Common myeloid progenitor, CD34-positive (primary cell): ENCODE measurements at regions of chr12 and their contacts with region 1.

Region 1: GRCh38 chr12:46382964-46383653 is 10.5 kb upstream of the SLC38A2 start:
- DNase-seq: peak; percentile 96 to 98 (median 98)
- H3K4me3 ChIP-seq: peak overlapping the region; percentile 60 to 93 (median 85)
- H3K27ac ChIP-seq: peak overlapping the region; percentile 84 to 93
- H3K4me1 ChIP-seq: peaks cover 29 to 52% (median 45%) of the 10 kb centered on the region in 4 experiments
- H3K27me3 ChIP-seq: no peaks in the 10 kb centered on the region

Region 2: DNA sequence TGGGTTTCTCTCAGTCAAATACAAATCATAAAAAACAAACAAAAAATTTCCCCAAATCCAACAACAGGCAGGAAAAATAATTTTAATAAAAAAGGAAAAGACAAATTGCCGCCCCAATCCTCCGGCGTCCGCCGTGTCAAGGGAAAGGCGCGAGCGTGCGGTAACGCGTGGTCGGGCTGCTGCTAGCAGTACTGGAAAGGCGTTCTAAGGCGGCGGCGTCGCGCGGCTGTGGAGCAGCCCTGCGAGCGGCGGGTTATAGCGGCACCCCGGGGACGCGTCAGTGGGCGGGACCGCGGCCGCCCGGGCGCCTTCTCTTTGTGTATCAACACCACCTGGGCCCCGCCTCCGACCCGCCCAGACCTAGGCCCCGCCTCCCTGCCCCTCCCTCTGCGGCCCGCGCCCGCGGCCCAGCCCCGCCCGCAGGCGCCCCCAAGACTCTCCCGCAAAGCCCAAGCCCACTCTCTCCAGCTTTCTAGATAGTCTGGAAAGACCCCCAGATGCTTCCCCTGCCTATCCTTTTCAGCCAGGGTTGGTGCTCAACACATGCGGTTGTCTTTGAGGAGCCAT is 10.5 kb before region 1 on chr12 and contains the start of gene SLC38A2:
- CTCF ChIA-PET with region 1: interaction called, 4 read pairs
- POLR2A ChIA-PET with region 1: interaction called, 25 read pairs
- DNase-seq: peak; percentile 92 to 94 (median 92)
- H3K4me3 ChIP-seq: peak within 1 kb of the TSS; percentile 89 to 100 (median 99)
- H3K27ac ChIP-seq: peak within 1 kb of the TSS; percentile 90 to 96
- H3K4me1 ChIP-seq: peaks cover 31 to 54% (median 41%) of the 10 kb centered on the region in 4 experiments
- H3K27me3 ChIP-seq: no peaks in the 10 kb centered on the region

Region 3: GRCh38 chr12:46395388-46395787 is 12.3 kb after region 1 on chr12:
- CTCF ChIA-PET with region 1: no interaction called
- POLR2A ChIA-PET with region 1: no interaction called
- DNase-seq: no peak
- H3K4me3 ChIP-seq: no peak overlapping the region
- H3K27ac ChIP-seq: no peak overlapping the region
- H3K4me1 ChIP-seq: peaks cover 0 to 1% (median 0%) of the 10 kb centered on the region in 4 experiments
- H3K27me3 ChIP-seq: no peaks in the 10 kb centered on the region